Left ventricle myocardium superior (tissue), 1 donor: ENCODE measurements at regions of chr11 and their contacts with region 1.

Region 1: DNA sequence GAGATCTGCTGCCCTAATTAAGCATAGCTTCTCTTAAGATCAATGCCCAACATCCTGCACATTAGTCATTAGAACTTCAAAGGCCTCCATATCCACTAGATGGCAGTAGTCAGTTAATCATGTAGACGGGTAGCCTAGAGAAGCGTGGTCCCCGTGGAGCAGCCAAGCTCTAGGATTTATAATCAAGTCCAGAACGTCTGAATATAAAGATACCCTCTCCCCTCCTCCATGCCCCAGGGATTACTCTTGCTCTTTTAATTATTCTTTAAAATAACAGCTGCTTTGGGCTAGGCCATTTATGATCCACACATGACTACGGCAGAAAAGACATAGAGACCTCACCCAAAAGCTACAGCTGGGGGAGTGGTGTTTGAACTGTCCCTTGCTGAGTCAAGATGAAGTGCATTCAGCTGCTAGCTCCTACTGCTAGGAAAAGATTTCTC is 327.6 kb upstream of the PLET1 start:
- DNase-seq: peak; percentile 66
- ATAC-seq: peak; percentile 87

Region 2: GRCh38 chr11:112537846-112538330 is 50.4 kb before region 1 on chr11:
- intact Hi-C with region 1: no loop called
- DNase-seq: no peak
- ATAC-seq: no peak

Region 3: GRCh38 chr11:112795142-112795815 is 207.0 kb after region 1 on chr11:
- intact Hi-C with region 1: loop called (anchors 10 kb)
- DNase-seq: peak; percentile 61
- ATAC-seq: peak; percentile 65

Region 4: DNA sequence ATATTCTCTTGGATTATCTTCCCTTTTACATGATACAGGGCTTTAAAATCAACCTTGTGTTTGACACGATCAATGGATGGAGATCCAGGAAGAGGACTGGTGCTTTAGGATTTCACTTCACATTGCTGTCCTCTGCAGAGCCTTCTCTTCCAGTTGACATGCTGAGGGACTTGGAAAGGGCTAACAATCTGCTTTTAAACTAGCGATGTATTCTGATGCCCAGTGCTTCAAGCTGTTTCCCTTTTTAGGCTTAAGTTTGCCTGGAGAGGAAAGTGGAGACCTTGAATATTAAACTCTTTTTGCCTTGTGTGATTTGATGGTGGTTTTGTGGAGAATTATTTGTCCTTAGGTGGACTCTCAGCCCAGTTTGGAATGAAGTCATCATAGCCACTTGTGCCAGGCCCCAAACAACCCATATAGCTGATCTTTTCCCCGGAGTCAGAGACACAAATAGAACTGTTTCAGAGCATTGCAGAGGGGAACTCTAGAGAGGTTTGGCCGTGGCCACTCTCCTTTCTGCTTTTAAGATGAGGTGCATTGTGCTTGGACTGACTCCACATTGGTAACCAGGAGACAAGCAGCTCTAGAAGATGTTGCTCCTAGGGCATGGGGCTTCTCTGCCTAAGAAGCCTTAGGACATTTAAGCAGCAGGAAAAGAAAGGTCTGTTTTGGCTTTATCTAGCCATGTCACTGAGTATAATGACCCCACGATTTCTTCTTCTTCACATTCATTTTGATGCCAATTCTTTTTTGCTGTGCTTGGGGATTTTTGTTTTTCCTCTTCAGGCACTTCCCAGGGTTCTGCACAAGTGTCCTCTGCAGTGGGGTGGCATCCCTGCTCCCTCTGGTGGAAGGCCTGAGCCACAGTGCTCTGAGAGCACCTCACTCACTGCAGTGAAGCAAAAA is 525.8 kb after region 1 on chr11:
- intact Hi-C with region 1: loop called (anchors 10 kb)
- DNase-seq: peak; percentile 72
- ATAC-seq: peak; percentile 92

Region 5: DNA sequence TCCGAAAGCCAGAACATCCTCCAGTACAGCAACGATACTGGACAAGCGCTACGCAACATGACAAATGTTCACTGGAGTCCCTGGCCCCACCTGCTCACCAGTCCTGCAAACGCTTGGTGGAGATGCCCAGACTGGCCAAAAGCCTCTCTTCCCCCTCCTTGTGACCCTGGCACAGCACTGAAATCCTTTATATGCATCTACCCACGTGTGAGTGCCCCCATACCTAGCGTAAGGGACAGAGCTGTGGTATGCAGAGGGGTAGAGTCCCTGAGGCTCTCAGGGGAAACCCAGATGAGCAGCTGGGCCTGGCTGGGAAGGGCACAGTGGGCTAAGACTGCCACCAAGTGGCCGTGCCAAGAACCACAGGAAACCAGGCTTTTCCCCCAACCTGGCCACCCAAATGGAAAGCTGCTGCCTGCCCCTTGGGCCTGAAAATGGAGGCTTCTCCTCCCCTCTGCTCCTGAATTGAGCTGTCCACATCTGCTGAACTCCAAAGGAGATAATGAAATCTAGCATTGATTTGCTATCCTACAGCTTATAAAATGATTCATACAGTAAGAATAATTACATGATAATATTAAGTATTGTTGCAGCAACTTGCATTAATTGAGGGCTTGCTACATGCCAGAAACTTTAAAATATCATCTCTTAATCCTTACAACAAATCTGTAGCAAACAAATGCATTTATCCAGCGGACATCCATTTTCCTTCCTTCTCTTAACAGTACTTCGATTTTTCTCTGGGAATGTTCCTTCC is 701.3 kb after region 1 on chr11:
- intact Hi-C with region 1: loop called (anchors 10 kb)
- DNase-seq: peak; percentile 65
- ATAC-seq: peak; percentile 84